ENCODE measurements at regions of chr5 and their contacts with region 1.

Region 1: GRCh38 chr5:149834246-149834855 is 104.2 kb downstream of the PPARGC1B start:
- DNase-seq: peak; percentile 94
- ATAC-seq: peak; percentile 61
- H3K4me3 ChIP-seq: no peak overlapping the region
- H3K27ac ChIP-seq: no peak overlapping the region
- H3K4me1 ChIP-seq: peaks cover 9% of the 10 kb centered on the region
- H3K27me3 ChIP-seq: no peaks in the 10 kb centered on the region
- CTCF ChIP-seq: peak; percentile 97

Region 2: GRCh38 chr5:149605998-149606724 is 228.2 kb before region 1 on chr5:
- CTCF ChIA-PET with region 1: no interaction called
- POLR2A ChIA-PET with region 1: no interaction called
- intact Hi-C with region 1: no loop called
- DNase-seq: peak; percentile 100
- ATAC-seq: peak; percentile 97
- H3K4me3 ChIP-seq: no peak overlapping the region
- H3K27ac ChIP-seq: peak overlapping the region; percentile 93
- H3K4me1 ChIP-seq: peaks cover 42% of the 10 kb centered on the region
- H3K27me3 ChIP-seq: no peaks in the 10 kb centered on the region
- CTCF ChIP-seq: no peak

Region 3: GRCh38 chr5:149804478-149805450 is 29.6 kb before region 1 on chr5:
- CTCF ChIA-PET with region 1: no interaction called
- POLR2A ChIA-PET with region 1: interaction called, 31 read pairs
- intact Hi-C with region 1: no loop called
- DNase-seq: no peak
- ATAC-seq: no peak
- H3K4me3 ChIP-seq: no peak overlapping the region
- H3K27ac ChIP-seq: no peak overlapping the region
- H3K4me1 ChIP-seq: peaks cover 10% of the 10 kb centered on the region
- H3K27me3 ChIP-seq: no peaks in the 10 kb centered on the region
- CTCF ChIP-seq: no peak

Region 4: GRCh38 chr5:149938791-149939358 is 104.5 kb after region 1 on chr5:
- CTCF ChIA-PET with region 1: interaction called, 5 read pairs
- POLR2A ChIA-PET with region 1: no interaction called
- intact Hi-C with region 1: loop called (anchors 1 kb)
- DNase-seq: peak; percentile 100
- ATAC-seq: peak; percentile 83
- H3K4me3 ChIP-seq: peak overlapping the region; percentile 55
- H3K27ac ChIP-seq: peak overlapping the region; percentile 91
- H3K4me1 ChIP-seq: peaks cover 60% of the 10 kb centered on the region
- H3K27me3 ChIP-seq: no peaks in the 10 kb centered on the region
- CTCF ChIP-seq: no peak

Region 5: DNA sequence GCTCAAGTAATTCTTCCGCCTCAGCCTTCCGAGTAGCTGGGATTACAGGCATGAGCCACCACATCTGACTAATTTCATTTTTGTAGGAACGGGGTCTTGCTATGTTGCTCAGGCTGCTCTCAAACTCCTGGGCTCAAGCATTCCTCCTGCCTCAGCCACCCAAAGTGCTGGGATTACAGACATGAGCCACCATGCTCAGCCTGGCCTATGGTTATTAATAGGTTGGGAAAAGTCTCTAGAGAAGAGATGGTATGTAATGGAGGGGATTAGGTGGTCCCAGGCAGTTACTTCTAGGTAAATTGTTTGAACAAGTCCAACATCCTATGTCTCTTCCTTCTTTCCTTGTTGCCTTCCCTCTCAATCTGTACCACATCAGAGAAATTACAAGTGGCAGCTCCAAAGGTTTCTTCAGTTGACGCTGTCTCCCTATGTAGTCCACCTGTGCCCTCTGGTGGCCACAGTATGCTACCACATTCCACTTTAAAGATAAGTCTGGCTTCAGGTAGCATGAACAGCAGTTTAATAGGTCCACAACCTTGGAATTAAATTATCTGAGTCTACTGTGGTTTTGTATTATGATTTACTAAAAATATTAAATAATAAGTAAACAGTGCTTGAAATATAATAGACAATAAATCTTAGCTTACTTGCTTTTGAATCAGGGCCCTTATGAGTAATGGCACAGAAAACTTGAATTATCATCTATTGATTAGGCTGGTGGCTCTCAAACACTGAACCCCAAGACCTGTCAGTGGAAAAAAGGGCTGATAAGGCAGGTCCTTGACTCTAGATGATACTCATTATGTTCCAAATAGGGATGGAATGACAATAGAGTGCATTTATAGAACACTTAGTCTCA is 156.4 kb after region 1 on chr5:
- CTCF ChIA-PET with region 1: interaction called, 31 read pairs
- POLR2A ChIA-PET with region 1: no interaction called
- intact Hi-C with region 1: loop called (anchors 1 kb)
- DNase-seq: peak; percentile 95
- ATAC-seq: peak; percentile 95
- H3K4me3 ChIP-seq: no peak overlapping the region
- H3K27ac ChIP-seq: no peak overlapping the region
- H3K4me1 ChIP-seq: no peaks in the 10 kb centered on the region
- H3K27me3 ChIP-seq: no peaks in the 10 kb centered on the region
- CTCF ChIP-seq: peak; percentile 98

Region 6: GRCh38 chr5:150436141-150436680 is 601.9 kb after region 1 on chr5:
- CTCF ChIA-PET with region 1: no interaction called
- POLR2A ChIA-PET with region 1: no interaction called
- intact Hi-C with region 1: loop called (anchors 10 kb)
- DNase-seq: peak; percentile 91
- ATAC-seq: peak; percentile 92
- H3K4me3 ChIP-seq: peak overlapping the region; percentile 16; the same call in 1 of the 2 replicates
- H3K27ac ChIP-seq: no peak overlapping the region
- H3K4me1 ChIP-seq: peaks cover 7% of the 10 kb centered on the region; the same call in 1 of the 2 replicates
- H3K27me3 ChIP-seq: no peaks in the 10 kb centered on the region
- CTCF ChIP-seq: peak; percentile 94